Activated CD4-positive, alpha-beta memory T cell treated with anti-CD3 and anti-CD28 coated beads, Interleukin-2, amount 10 ng/mL, durations not matched to agents 7 days and 5 days (primary cell): ENCODE measurements at regions of chr20 and their contacts with region 1.

Region 1: DNA sequence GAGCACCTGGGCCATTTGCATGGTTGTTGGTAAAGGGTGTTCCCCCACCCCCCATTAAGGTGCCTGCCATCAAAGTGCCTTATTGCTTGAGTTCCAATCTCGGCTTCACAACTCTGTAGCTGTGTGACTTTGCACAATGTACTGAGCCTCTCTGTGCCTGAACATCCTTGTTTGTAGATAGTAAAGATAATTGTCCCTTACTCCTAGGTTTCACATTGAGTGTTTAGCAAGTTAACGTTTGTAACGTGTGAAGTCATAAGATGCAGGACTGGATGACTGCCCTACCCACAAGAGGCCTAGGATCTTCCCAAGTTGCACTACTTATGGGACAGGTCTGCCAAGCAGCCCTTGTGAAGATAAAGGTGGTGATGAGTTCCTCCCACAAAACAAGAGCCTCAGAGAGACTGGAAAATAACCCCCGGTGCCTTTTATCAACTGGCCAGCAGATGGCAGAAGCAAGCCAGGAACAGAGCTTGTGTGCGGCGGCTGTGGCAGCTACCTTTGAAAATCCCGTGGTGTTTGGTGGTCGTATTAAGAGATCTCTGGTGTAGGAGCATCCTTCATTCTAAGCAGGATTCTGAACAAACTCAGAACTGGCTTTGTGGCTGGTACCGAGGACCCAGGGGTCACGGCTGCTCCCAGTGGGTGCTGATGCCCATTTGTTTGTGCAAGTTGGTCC is 99.0 kb downstream of the CDH26 start:
- DNase-seq: peak; percentile 79
- H3K4me3 Mint-ChIP-seq: peak overlapping the region; percentile 84
- H3K27ac Mint-ChIP-seq: peak overlapping the region; percentile 88
- H3K4me1 Mint-ChIP-seq: peaks cover 62% of the 10 kb centered on the region
- H3K27me3 Mint-ChIP-seq: peaks cover 2% of the 10 kb centered on the region

Region 2: GRCh38 chr20:59940174-59940971 is 116.9 kb before region 1 on chr20 and contains the starts of genes FAM217B and PPP1R3D:
- CTCF ChIA-PET with region 1: interaction called, 13 read pairs
- POLR2A ChIA-PET with region 1: interaction called, 40 read pairs
- DNase-seq: peak; percentile 94
- H3K4me3 Mint-ChIP-seq: peak within 1 kb of the TSS; percentile 89
- H3K27ac Mint-ChIP-seq: peak within 1 kb of the TSS; percentile 97
- H3K4me1 Mint-ChIP-seq: peaks cover 35% of the 10 kb centered on the region
- H3K27me3 Mint-ChIP-seq: no peaks in the 10 kb centered on the region
- total RNA-seq, gene FAM217B: 26.5 to 27.4 TPM
- total RNA-seq, gene PPP1R3D: 9.7 to 10.3 TPM

Region 3: DNA sequence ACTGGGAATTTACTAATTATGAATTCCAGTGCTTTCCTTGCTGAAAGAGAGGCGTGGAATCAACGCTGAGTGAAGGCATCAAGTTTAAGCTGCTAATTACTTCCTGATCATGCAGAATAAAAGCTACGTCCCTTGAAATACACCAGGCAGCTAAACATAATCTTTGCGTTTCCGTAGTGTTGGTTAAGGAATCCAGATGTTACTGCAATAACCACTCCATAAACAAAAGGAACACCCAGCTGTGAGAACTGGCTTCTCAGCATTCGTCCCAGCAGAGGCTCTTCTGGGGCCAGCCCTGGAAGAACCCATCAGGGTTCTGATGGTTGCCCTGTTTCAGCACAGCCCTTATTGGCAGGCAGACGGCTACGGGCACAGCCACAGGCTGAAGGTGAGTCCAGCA is 12.4 kb after region 1 on chr20:
- CTCF ChIA-PET with region 1: interaction called, 11 read pairs
- POLR2A ChIA-PET with region 1: interaction called, 3 read pairs
- DNase-seq: no peak
- H3K4me3 Mint-ChIP-seq: no peak overlapping the region
- H3K27ac Mint-ChIP-seq: no peak overlapping the region
- H3K4me1 Mint-ChIP-seq: no peaks in the 10 kb centered on the region
- H3K27me3 Mint-ChIP-seq: no peaks in the 10 kb centered on the region

Region 4: GRCh38 chr20:60262967-60263603 is 205.8 kb after region 1 on chr20:
- CTCF ChIA-PET with region 1: interaction called, 29 read pairs
- POLR2A ChIA-PET with region 1: no interaction called
- DNase-seq: peak; percentile 63
- H3K4me3 Mint-ChIP-seq: no peak overlapping the region
- H3K27ac Mint-ChIP-seq: no peak overlapping the region
- H3K4me1 Mint-ChIP-seq: peaks cover 9% of the 10 kb centered on the region
- H3K27me3 Mint-ChIP-seq: peaks cover 4% of the 10 kb centered on the region